ENCODE measurements at regions of chr1 and their contacts with region 1.

Region 1: DNA sequence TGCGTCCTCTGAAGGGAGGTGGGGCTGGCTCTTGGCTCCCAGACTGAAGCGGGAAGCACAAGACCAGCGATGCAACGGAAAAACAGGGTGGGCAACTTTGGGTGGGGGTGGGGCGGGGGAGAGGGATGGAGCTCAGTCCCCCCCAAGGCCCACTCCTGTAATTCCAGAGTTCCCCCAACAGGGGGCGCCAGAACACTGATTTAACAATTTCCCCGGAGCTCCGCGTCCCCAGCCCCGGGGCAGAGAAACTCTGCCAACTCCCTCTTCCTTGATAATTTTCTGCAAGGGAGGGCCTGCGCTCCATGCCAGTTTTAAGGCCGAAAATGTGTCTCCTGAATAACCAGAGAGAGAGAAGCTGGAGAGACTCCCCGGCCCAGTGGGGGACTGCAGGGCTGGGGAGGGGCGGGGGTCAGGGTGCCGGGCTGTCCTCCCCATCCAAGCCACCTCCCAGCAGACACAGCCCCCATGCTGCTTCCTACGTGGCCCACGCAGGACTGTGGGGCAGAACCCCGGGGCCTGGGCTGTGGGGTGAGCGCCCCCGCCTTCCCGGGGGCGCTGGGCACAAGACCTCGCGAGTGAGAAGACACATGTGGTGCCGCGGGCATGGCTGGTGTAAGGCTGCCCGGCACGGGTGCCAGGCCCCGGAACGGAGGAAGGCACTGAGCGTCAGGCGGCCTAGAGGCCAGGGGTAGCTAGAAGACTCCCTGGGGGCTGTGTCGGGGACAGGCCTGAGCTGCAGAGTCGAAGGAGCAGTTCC is 51.4 kb downstream of the KIF21B start:
- DNase-seq: peak; percentile 89

Region 2: DNA sequence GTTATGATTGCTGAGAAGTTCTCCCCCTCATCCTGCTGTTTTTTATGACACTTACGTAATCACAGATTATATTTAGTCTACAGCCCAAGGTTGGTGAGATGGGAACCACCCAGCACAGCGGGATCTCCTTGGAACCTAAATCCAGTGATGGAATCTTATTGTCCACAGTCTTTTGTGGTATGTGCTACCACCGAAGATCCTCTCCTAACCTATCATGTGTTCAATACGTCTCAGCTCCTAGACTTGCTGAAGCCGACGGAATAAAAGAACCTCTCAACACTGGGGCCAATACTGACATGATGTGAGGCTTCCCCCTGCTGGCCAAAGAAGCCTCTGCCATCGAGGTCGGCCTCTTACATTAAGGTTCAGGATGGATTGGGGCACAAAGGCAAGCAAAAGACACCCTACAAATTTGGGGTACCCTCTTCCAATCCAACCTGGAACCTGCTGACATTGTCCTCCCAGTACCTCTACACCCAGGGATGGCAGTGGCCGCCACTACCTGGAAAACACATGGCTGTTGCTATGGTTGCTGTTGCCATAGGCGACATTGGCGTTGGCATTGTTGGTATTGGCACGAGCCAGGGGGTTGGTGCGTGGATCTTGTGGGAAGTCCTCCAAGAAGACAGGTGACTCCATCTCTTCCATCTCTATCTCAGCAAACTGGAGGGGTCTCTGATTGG is 70.8 kb after region 1 on chr1:
- CTCF ChIA-PET with region 1: interaction called, 33 read pairs
- POLR2A ChIA-PET with region 1: interaction called, 3 read pairs
- DNase-seq: peak; percentile 85

Region 3: DNA sequence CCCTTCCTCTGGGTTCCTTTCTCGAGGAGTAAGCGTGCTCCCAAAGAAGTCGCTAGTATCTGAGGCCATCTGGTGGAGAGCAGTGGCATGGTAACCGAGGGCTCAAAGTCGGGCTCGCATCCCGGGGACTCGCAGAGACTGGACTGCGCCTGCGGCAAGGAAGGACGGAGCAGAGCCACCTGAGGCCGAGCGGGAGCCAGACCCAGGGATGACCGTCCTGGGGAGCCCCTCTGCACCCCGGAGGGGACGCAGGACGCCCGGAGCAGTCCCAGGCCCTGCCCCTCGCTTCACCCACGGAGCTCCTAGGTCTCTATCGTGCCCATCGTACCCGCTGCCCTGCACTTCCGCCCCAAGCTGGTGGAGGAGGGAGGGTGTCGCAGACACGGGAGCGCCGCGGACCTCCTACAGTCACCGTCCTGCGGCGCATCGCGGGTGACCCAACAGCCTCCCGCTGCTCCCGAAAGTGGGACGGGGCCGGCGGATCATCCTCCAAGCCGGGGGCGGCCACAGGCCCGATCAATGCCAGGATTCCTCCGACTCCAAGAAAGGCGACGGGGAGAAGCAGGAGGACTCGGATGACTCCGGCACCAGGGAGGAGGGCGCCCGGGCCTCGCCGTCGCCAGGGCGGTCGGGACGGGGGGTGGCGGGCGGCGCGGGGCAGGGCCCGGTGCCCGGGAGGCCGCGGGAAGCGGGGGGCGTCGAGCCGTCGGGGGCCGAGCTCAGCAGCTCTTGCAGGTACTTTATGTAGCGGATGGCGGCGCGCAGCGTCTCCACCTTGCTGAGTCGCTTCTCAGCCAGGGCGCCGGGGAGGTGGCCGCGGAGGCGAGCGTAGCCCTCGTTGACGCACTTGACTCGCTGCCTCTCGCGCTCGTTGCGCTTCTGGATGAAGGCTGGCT is 142.4 kb after region 1 on chr1:
- CTCF ChIA-PET with region 1: interaction called, 17 read pairs
- POLR2A ChIA-PET with region 1: interaction called, 6 read pairs
- DNase-seq: peak; percentile 96

Region 4: GRCh38 chr1:201119206-201120197 is 147.4 kb after region 1 on chr1:
- CTCF ChIA-PET with region 1: interaction called, 17 read pairs
- POLR2A ChIA-PET with region 1: interaction called, 6 read pairs
- DNase-seq: peak; percentile 83

Measured in HEK293T (cell line).